ENCODE measurements at regions of chr5 and their contacts with region 1.

Region 1: GRCh38 chr5:43631182-43631910 is 28.4 kb downstream of the NNT start:
- DNase-seq: peak; percentile 43
- ATAC-seq: peak; percentile 97
- H3K4me3 Mint-ChIP-seq: no peak overlapping the region
- H3K27ac Mint-ChIP-seq: no peak overlapping the region
- H3K4me1 Mint-ChIP-seq: peaks cover 7% of the 10 kb centered on the region
- H3K27me3 Mint-ChIP-seq: no peaks in the 10 kb centered on the region
- CTCF ChIP-seq: peak; percentile 72

Region 2: DNA sequence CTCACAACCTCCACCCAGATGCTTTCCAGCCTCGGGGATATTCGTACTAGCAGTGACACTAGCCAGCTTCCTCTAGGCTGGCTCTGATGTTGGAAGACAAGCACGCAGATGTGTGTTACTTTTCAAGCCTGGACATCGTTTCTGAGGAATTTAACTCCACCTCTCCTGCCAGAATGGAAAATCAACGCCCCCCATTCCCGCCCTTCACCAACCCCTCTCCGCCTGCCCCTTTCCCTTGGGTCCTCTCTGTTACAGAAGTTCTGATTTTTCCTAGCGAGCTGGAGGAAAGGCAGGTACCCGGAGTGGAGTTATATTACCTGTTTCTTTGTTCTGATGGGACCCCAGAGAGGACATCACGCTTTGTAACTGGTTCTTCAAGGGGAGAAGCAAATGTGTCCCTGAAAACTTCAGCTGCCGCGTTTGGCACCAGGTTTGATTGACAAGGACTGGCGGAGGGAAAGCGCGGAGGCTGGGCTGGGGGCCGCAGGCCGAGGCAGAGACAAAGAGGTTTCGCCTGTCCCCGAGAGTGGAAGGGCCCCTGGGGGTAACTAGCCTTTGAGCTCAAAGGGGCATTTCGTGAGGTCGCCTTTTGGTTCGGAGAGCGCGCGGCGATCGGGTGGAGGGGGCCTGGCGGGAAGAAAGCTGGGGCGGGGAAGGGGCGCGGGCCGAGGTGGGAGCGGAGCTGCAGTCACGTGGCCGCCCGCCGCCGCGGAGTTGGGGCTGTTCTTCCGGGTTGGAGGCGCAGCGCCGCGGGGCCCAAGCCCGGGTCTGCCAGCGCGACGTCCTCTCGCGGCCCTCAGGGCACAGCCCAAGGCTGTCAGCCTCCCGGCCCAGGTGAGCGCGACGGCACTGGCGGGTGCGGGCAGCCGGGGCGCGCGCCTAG is 28.6 kb before region 1 on chr5 and contains the start of gene NNT:
- CTCF ChIA-PET with region 1: interaction called, 25 read pairs
- POLR2A ChIA-PET with region 1: interaction called, 9 read pairs
- intact Hi-C with region 1: no loop called
- DNase-seq: peak; percentile 84
- ATAC-seq: peak; percentile 72
- H3K4me3 Mint-ChIP-seq: peak within 1 kb of the TSS; percentile 86
- H3K27ac Mint-ChIP-seq: peak within 1 kb of the TSS; percentile 87
- H3K4me1 Mint-ChIP-seq: peaks cover 38% of the 10 kb centered on the region
- H3K27me3 Mint-ChIP-seq: no peaks in the 10 kb centered on the region
- CTCF ChIP-seq: no peak
- total RNA-seq, gene NNT: 72.0 to 78.4 TPM

Region 3: GRCh38 chr5:43609752-43610151 is 21.6 kb before region 1 on chr5:
- CTCF ChIA-PET with region 1: interaction called, 27 read pairs
- POLR2A ChIA-PET with region 1: interaction called, 3 read pairs
- intact Hi-C with region 1: no loop called
- DNase-seq: peak; percentile 14
- ATAC-seq: peak; percentile 85
- H3K4me3 Mint-ChIP-seq: no peak overlapping the region
- H3K27ac Mint-ChIP-seq: no peak overlapping the region
- H3K4me1 Mint-ChIP-seq: peaks cover 18% of the 10 kb centered on the region
- H3K27me3 Mint-ChIP-seq: no peaks in the 10 kb centered on the region
- CTCF ChIP-seq: no peak

Region 4: GRCh38 chr5:43616535-43616934 is 14.8 kb before region 1 on chr5:
- CTCF ChIA-PET with region 1: interaction called, 41 read pairs
- POLR2A ChIA-PET with region 1: interaction called, 3 read pairs
- intact Hi-C with region 1: no loop called
- DNase-seq: no peak
- ATAC-seq: no peak
- H3K4me3 Mint-ChIP-seq: no peak overlapping the region
- H3K27ac Mint-ChIP-seq: no peak overlapping the region
- H3K4me1 Mint-ChIP-seq: no peaks in the 10 kb centered on the region
- H3K27me3 Mint-ChIP-seq: no peaks in the 10 kb centered on the region
- CTCF ChIP-seq: no peak

Region 5: GRCh38 chr5:43646992-43647391 is 15.6 kb after region 1 on chr5:
- CTCF ChIA-PET with region 1: interaction called, 41 read pairs
- POLR2A ChIA-PET with region 1: no interaction called
- intact Hi-C with region 1: no loop called
- DNase-seq: no peak
- ATAC-seq: no peak
- H3K4me3 Mint-ChIP-seq: no peak overlapping the region
- H3K27ac Mint-ChIP-seq: no peak overlapping the region
- H3K4me1 Mint-ChIP-seq: no peaks in the 10 kb centered on the region
- H3K27me3 Mint-ChIP-seq: no peaks in the 10 kb centered on the region
- CTCF ChIP-seq: no peak